CD14-positive monocyte (primary cell): ENCODE measurements at regions of chr6 and their contacts with region 1.

Region 1: GRCh38 chr6:11324453-11325015 is 92.1 kb upstream of the NEDD9 start:
- DNase-seq: no peak
- H3K4me3 ChIP-seq: peak overlapping the region in 1 of 3 experiments; percentile 42
- H3K4me3 Mint-ChIP-seq: peak overlapping the region; percentile 53 to 65
- H3K27ac ChIP-seq: peak overlapping the region; percentile 97 to 98
- H3K27ac Mint-ChIP-seq: peak overlapping the region; percentile 98 to 100 (median 99)
- H3K4me1 ChIP-seq: peaks cover 39 to 45% of the 10 kb centered on the region in 2 donors
- H3K4me1 Mint-ChIP-seq: peaks cover 60% of the 10 kb centered on the region
- H3K27me3 ChIP-seq: no peaks in the 10 kb centered on the region
- H3K27me3 Mint-ChIP-seq: peaks cover 1 to 2% (median 2%) of the 10 kb centered on the region in 3 donors
- CTCF ChIP-seq: no peak

Region 2: DNA sequence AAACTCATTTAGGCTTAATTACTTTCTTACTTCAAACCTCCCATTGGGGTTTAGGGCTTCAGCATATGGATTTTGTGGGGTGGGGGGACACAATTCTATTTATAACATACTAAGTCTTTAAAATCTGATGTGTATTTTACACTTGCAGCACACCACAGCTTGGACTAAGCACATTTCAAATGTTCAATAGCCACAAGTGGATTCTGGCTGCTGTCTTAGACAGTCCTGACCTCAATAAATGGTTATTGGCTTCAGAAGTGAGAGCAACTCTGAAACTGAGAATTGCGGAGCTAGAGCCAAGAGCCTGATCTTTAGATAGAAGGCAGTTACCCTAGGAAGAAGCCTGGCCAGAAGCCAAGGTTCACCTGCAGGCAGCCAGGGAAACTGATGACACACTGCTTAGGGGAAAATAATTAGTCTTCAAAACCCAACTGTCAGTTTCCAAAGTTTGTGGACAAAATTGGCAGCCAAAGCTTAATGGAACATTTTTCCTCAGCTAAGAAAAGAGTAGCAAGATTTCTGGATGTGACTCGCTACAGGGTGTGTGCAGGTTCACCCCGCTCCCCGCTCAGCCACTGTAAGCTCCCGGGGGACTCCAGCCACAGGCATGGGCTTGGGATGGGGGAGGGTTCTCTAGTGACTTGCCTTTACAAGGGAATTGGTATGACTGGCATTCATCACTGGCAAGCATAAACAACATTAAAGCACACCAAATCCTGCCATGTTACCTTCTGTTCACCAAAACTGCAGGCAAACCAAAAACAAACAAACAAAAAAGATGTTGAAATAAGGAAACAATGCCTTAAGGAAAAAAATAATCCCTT is 1129.5 kb before region 1 on chr6:
- intact Hi-C with region 1: no loop called
- DNase-seq: no peak
- H3K4me3 ChIP-seq: no peak overlapping the region
- H3K4me3 Mint-ChIP-seq: no peak overlapping the region
- H3K27ac ChIP-seq: no peak overlapping the region
- H3K27ac Mint-ChIP-seq: no peak overlapping the region
- H3K4me1 ChIP-seq: no peaks in the 10 kb centered on the region
- H3K4me1 Mint-ChIP-seq: no peaks in the 10 kb centered on the region
- H3K27me3 ChIP-seq: peaks cover 0 to 2% of the 10 kb centered on the region in 2 donors
- H3K27me3 Mint-ChIP-seq: peaks cover 1 to 6% (median 4%) of the 10 kb centered on the region in 3 donors
- CTCF ChIP-seq: no peak

Region 3: GRCh38 chr6:11144393-11144851 is 180.1 kb before region 1 on chr6:
- intact Hi-C with region 1: loop called in 1 of 2 experiments (anchors 10 kb)
- DNase-seq: peak; percentile 69 to 82 (median 76)
- H3K4me3 ChIP-seq: no peak overlapping the region
- H3K4me3 Mint-ChIP-seq: peak overlapping the region in 1 of 2 donors; percentile 33
- H3K27ac ChIP-seq: peak overlapping the region in 1 of 2 donors; percentile 81
- H3K27ac Mint-ChIP-seq: peak overlapping the region; percentile 69 to 98 (median 95)
- H3K4me1 ChIP-seq: peaks cover 30 to 33% of the 10 kb centered on the region in 2 donors
- H3K4me1 Mint-ChIP-seq: peaks cover 35% of the 10 kb centered on the region
- H3K27me3 ChIP-seq: no peaks in the 10 kb centered on the region
- H3K27me3 Mint-ChIP-seq: peaks cover 0 to 2% (median 0%) of the 10 kb centered on the region in 3 donors
- CTCF ChIP-seq: peak; percentile 96

Region 4: GRCh38 chr6:11353921-11354389 is 29.4 kb after region 1 on chr6:
- intact Hi-C with region 1: loop called (anchors 1 to 5 kb)
- DNase-seq: peak; percentile 38 to 79 (median 62)
- H3K4me3 ChIP-seq: no peak overlapping the region
- H3K4me3 Mint-ChIP-seq: no peak overlapping the region
- H3K27ac ChIP-seq: peak overlapping the region; percentile 4 to 11
- H3K27ac Mint-ChIP-seq: peak overlapping the region; percentile 71 to 92 (median 88)
- H3K4me1 ChIP-seq: peaks cover 70 to 93% of the 10 kb centered on the region in 2 donors
- H3K4me1 Mint-ChIP-seq: peaks cover 89% of the 10 kb centered on the region
- H3K27me3 ChIP-seq: no peaks in the 10 kb centered on the region
- H3K27me3 Mint-ChIP-seq: peaks cover 0 to 1% (median 0%) of the 10 kb centered on the region in 3 donors
- CTCF ChIP-seq: no peak

Region 5: DNA sequence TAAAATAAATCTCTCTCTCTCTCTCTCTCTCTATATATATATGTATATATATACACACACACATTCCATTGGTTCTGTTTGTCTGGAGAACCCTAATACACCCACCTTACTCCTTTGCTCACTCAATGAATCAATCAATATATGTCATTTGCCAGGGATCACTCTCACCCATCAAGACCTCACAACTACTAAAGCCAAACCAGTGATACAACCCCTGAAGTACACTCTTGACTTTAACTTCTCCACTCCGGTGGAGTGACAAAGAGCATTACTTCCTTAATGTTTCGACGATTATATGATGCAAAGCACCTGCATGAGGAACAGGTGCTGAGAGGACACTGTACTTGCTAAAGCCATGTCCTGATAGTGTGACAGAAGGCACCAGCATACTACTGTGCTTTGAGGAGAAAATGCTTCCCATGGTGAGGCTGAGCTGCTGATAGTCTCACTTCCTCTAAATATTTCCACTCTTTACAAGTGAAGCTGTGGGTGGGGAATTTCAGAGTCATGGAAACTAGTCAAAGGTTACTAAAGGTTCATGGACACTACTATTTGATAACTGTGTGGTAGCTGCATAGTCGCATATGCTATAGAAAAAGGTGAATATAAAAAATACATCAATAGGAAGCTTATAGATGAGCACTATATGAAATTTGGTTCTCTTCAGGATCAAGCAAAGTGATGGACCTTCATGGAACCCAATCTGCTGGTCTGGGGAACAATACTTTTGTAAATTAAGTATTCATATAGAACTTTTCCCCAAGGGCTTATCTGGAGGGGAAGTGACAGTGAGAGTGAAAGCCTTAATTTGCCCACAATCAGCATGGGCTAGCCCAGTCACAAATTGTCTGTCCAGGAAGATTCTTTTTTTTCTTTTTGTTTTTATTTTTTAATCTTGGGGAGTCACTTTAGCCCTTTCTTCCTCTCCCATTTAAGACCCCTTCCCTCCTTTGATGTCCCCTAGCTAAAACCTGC is 49.8 kb after region 1 on chr6:
- intact Hi-C with region 1: loop called in 1 of 2 experiments (anchors 2 kb)
- DNase-seq: peak; percentile 79 to 90 (median 90)
- H3K4me3 ChIP-seq: peak overlapping the region in 1 of 3 experiments; percentile 53
- H3K4me3 Mint-ChIP-seq: peak overlapping the region; percentile 28 to 71
- H3K27ac ChIP-seq: peak overlapping the region; percentile 66 to 91
- H3K27ac Mint-ChIP-seq: peak overlapping the region; percentile 90 to 97 (median 96)
- H3K4me1 ChIP-seq: peaks cover 86 to 97% of the 10 kb centered on the region in 2 donors
- H3K4me1 Mint-ChIP-seq: peaks cover 82% of the 10 kb centered on the region
- H3K27me3 ChIP-seq: no peaks in the 10 kb centered on the region
- H3K27me3 Mint-ChIP-seq: peaks cover 0 to 1% (median 0%) of the 10 kb centered on the region in 3 donors
- CTCF ChIP-seq: no peak

Region 6: GRCh38 chr6:11414176-11414963 is 89.8 kb after region 1 on chr6:
- intact Hi-C with region 1: loop called in 1 of 2 experiments (anchors 5 kb)
- DNase-seq: peak; percentile 23 to 71 (median 68)
- H3K4me3 ChIP-seq: no peak overlapping the region
- H3K4me3 Mint-ChIP-seq: no peak overlapping the region
- H3K27ac ChIP-seq: peak overlapping the region in 1 of 2 donors; percentile 55
- H3K27ac Mint-ChIP-seq: peak overlapping the region; percentile 66 to 86 (median 81)
- H3K4me1 ChIP-seq: peaks cover 14 to 21% of the 10 kb centered on the region in 2 donors
- H3K4me1 Mint-ChIP-seq: peaks cover 29% of the 10 kb centered on the region
- H3K27me3 ChIP-seq: no peaks in the 10 kb centered on the region
- H3K27me3 Mint-ChIP-seq: peaks cover 0 to 3% (median 2%) of the 10 kb centered on the region in 3 donors
- CTCF ChIP-seq: no peak